Natural killer cell (primary cell): ENCODE measurements at regions of chr13 and their contacts with region 1.

Region 1: GRCh38 chr13:42969558-42970172 is 22.4 kb downstream of the EPSTI1 start:
- DNase-seq: peak; percentile 81 to 88
- ATAC-seq: peak; percentile 87 to 93 (median 91)
- H3K4me3 ChIP-seq: no peak overlapping the region
- H3K4me3 Mint-ChIP-seq: no peak overlapping the region
- H3K27ac ChIP-seq: no peak overlapping the region
- H3K27ac Mint-ChIP-seq: peak overlapping the region; percentile 34 to 75
- H3K4me1 ChIP-seq: peaks cover 12% of the 10 kb centered on the region
- H3K4me1 Mint-ChIP-seq: peaks cover 21 to 23% of the 10 kb centered on the region in 2 donors
- H3K27me3 ChIP-seq: no peaks in the 10 kb centered on the region
- H3K27me3 Mint-ChIP-seq: no peaks in the 10 kb centered on the region
- CTCF ChIP-seq: peak; percentile 95

Region 2: DNA sequence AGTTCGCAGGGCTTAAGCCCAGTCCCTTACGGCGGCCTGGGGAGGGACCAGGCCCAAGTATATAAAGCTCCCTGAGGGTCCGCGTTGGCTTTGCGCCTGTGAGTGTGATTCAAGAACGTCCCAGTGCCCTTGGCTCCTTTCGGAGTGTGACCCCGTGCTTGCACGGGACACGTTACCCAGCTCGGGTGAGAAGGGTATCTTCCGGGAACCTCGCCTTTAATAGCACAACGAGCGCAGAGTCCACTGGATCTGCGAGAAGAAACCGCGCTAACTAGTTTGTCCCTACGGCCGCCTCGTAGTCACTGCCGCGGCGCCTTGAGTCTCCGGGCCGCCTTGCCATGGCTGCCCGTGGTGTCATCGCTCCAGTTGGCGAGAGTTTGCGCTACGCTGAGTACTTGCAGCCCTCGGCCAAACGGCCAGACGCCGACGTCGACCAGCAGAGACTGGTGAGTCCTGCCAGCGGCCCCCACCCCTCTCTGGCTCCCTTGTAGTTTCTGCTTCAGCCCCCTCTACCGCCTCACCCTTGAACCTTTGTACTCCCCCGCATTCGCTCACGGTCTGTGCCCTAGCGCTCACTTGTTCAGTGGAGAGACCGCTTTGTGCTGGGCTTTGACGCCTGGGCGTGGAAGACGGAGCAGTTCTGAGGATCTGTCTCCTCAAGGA is 53.8 kb after region 1 on chr13 and contains the start of gene DNAJC15:
- intact Hi-C with region 1: loop called (anchors 1 kb)
- DNase-seq: peak; percentile 83 to 88
- ATAC-seq: peak; percentile 89 to 92 (median 90)
- H3K4me3 ChIP-seq: peak within 1 kb of the TSS; percentile 71
- H3K4me3 Mint-ChIP-seq: peak within 1 kb of the TSS; percentile 94
- H3K27ac ChIP-seq: peak within 1 kb of the TSS; percentile 77
- H3K27ac Mint-ChIP-seq: peak within 1 kb of the TSS; percentile 91 to 99
- H3K4me1 ChIP-seq: peaks cover 22% of the 10 kb centered on the region
- H3K4me1 Mint-ChIP-seq: peaks cover 18 to 34% of the 10 kb centered on the region in 2 donors
- H3K27me3 ChIP-seq: no peaks in the 10 kb centered on the region
- H3K27me3 Mint-ChIP-seq: no peaks in the 10 kb centered on the region
- CTCF ChIP-seq: no peak
- total RNA-seq, gene DNAJC15: 7.7 to 10.0 (median 8.3) TPM

Region 3: GRCh38 chr13:43085545-43085944 is 115.9 kb after region 1 on chr13:
- intact Hi-C with region 1: loop called (anchors 5 kb)
- DNase-seq: peak in 1 of 2 donors; percentile 52
- ATAC-seq: peak in 1 of 3 donors; percentile 34
- H3K4me3 ChIP-seq: no peak overlapping the region
- H3K4me3 Mint-ChIP-seq: no peak overlapping the region
- H3K27ac ChIP-seq: no peak overlapping the region
- H3K27ac Mint-ChIP-seq: peak overlapping the region in 1 of 2 donors; percentile 18
- H3K4me1 ChIP-seq: no peaks in the 10 kb centered on the region
- H3K4me1 Mint-ChIP-seq: peaks cover 18 to 22% of the 10 kb centered on the region in 2 donors
- H3K27me3 ChIP-seq: no peaks in the 10 kb centered on the region
- H3K27me3 Mint-ChIP-seq: no peaks in the 10 kb centered on the region
- CTCF ChIP-seq: peak; percentile 76

Region 4: DNA sequence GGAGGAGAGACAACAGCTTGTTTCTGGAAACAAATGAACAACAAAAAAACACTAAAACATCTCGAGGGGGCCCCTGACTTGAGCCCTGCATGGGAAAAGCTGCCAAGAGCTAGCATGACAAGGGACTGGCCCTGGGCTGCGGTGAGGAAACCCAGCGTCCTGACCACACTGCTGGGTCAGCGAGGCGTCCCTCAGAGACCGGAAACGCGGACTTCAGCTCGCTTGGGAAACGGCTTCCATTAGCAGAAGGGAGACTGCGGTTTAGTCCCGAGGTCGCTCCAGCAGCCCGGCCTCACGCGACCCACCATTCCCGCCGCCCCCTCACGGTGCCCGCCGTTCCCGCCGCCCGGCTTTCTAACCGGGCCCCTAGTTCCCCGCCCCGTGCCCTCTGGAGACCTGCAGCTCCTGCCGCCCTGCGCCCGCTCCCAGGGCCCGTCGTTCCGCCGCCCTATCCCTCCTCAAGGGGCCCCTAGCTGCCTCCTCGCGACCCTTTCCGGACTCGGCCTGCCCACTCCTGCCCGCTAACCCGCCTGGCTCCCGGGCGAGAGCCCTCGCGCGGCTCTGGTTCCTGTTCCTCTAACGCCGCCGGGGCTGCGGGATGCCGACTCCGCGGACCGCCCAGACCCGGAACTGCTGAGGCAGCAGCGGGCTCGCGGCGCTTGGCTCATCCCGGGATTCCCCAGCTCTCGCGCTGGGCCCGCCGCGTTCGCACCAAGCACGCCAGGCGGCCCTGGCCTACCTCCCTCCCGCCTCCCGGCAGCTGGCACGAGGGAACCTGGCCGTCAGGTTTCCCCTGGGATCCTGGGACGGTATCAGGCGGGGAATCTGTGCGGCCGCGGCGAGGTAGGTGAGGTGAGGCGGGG is 909.5 kb after region 1 on chr13 and contains the start of gene CCDC122:
- intact Hi-C with region 1: loop called (anchors 5 kb)
- DNase-seq: peak; percentile 81 to 88
- ATAC-seq: peak; percentile 91
- H3K4me3 ChIP-seq: peak within 1 kb of the TSS; percentile 64
- H3K4me3 Mint-ChIP-seq: peak within 1 kb of the TSS; percentile 93
- H3K27ac ChIP-seq: peak within 1 kb of the TSS; percentile 69
- H3K27ac Mint-ChIP-seq: peak within 1 kb of the TSS; percentile 83 to 97
- H3K4me1 ChIP-seq: peaks cover 12% of the 10 kb centered on the region
- H3K4me1 Mint-ChIP-seq: peaks cover 16 to 28% of the 10 kb centered on the region in 2 donors
- H3K27me3 ChIP-seq: no peaks in the 10 kb centered on the region
- H3K27me3 Mint-ChIP-seq: no peaks in the 10 kb centered on the region
- CTCF ChIP-seq: no peak
- total RNA-seq, gene CCDC122: 1.2 to 2.1 (median 1.6) TPM